ENCODE measurements at regions of chr20 and their contacts with region 1.

Region 1: DNA sequence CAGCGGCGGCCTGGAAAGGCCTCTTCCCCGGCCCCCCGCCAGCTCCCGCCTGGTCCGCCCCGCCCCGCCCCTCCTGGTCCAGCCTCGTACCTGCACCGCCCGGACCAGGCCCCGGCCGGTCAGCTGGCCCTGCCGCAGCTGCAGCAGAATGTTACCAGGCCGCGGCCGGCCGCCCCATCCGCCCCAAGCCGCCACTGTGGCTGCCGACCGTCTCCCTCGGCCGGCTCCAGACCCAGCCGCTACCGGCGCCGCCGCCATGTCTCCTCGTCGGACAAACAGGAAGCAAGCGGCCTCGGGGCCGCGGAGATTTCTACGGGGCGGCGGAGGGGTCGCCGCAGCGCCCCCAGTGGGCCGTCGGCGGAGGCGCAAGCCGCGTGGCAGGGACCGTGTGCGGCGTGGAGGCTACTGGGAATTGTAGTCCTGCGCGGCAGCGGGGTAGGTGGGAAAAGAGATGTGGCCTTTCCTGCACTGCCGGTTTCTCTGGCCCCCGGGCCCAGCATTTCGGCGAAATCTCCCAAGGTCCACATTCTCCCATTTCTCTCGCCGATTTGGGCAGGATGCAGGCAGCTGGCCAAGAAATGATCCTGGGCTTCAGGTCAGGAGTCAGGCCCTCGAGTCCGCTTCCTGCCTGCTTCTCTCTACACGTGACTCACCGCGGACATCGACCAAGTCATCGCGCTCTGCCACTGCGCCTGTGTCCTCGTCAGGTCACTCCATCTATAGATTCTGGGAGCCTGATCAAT is at the start of gene TRPC4AP:
- DNase-seq: peak; percentile 98
- total RNA-seq, gene TRPC4AP: 42.6 to 48.9 TPM

Region 2: DNA sequence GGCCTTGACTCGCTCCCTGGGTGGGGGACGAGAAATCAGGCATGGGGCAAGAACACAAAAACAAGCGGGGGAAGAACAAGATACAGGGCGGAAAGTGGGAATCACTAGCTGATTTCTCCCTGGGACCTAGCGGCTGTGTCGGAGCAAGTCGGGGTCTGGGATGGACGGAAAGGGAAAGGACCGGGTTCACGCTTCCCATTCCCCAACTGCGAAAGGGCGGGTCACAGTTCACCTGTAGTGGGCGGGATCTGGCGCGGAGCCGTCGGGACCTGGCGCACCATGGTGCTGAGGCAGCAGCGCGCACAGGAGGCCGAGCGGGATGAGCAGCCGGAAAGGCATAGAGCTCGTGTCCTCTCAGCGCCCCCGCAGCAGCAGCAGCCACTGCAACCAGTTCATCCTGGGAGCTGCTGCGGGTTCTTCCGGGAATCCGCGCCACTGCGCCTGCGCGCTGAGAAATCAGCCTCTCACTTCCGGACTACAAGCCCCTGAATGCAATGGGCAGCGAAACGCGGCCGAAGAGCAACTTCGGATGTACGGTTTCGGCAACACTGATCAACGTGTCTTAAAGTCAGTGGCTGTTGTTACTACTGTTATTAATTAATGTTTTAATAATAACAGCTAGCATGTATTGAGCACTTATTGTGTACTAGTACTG is 54.4 kb after region 1 on chr20 and contains the start of gene EDEM2:
- intact Hi-C with region 1: loop called in 1 of 2 experiments (anchors 10 kb)
- DNase-seq: peak; percentile 99
- total RNA-seq, gene EDEM2: 27.9 to 30.6 TPM

Region 3: DNA sequence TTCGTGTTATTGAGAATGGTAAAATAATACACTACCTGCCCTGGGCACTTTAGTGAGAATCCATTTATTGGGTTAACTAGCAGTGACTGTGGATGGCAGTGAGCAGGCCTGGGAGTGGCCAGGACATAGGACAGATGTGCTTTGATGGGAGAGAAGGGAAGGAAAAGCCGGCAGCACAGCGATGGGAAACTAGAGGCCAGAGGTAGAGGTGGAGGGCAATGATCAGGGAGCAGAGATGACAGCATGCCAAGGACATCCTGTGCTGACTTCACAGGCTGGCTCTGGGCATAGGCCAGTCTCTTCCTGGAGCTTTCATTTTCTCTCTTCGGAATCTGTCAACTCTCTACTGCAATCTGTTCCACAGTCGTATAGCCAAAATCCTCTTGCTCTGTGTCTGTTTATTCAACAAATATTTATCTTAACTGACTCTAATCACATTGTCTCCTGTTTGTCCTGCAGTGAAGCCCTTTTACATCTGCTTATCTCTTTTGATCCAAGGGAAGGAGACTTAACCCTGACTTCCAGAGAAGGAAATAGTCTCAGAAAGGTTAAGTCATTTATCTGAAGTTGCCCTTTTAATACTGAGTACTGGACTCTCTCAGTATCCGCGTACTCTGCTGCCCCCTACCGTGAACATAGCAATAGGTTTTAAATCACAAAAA is 115.4 kb after region 1 on chr20:
- intact Hi-C with region 1: loop called (anchors 5 to 10 kb)
- DNase-seq: peak; percentile 92

Region 4: DNA sequence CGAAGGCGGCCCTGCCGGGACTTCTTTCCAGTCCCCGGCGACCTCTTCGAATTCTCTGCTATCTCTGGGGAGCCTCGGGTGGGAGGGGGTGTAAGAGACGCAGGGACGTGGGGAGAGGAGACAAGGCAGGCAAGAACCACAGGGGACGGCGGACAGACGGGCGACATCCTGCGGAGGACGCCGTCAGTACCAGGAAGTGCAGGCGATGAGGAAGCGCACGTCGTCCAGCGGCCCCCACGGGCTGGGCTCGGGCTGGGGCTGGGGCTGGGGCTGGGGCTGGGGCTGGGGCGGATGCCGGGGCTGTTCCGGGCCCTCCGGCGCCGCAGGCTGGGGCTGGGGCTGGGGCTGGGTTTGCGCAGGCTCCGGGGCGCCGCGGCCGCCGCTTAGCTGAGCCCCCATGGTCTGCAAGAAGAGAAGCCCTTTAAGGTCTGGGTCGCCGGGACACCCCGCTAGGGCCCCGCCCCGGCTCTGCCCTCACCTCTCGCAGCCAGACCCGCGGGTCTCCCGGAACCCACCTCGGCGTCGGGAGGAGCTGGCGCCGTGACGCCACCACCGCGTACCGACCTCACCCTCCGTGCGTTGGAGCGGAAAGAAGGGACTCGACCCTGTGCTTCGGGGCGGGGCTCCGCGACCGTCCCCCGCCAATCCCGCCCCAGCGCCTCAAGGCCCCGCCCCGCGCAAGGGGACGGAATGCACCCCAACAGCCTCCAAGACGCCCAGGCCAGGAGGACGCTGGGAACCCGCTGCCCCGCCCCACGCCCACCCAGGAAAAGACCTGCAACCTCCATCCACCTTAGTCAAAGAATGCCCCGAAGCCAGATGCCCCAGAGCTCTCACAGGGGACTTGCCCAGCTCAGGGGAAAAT is 185.1 kb after region 1 on chr20 and contains the start of gene MMP24OS:
- intact Hi-C with region 1: loop called in 1 of 2 experiments (anchors 10 kb)
- DNase-seq: peak; percentile 98
- total RNA-seq, gene MMP24OS: 40.4 to 54.6 TPM